Sigmoid colon (tissue), 7 donors: ENCODE measurements at regions of chr20 and their contacts with region 1.

Region 1: GRCh38 chr20:57493091-57493615 is 31.8 kb downstream of the CTCFL start:
- DNase-seq: no peak
- H3K4me3 ChIP-seq: no peak overlapping the region
- H3K27ac ChIP-seq: peak overlapping the region; percentile 66 to 76 (median 68)
- H3K4me1 ChIP-seq: peaks cover 0 to 15% (median 12%) of the 10 kb centered on the region in 4 donors
- H3K27me3 ChIP-seq: no peaks in the 10 kb centered on the region
- CTCF ChIP-seq: no peak
- EP300 ChIP-seq: no peak
- POLR2A ChIP-seq: no peak

Region 2: GRCh38 chr20:57383447-57384347 is 109.5 kb before region 1 on chr20:
- intact Hi-C with region 1: loop called (anchors 1 kb)
- DNase-seq: no peak
- H3K4me3 ChIP-seq: no peak overlapping the region
- H3K27ac ChIP-seq: no peak overlapping the region
- H3K4me1 ChIP-seq: peaks cover 0 to 11% (median 0%) of the 10 kb centered on the region in 4 donors
- H3K27me3 ChIP-seq: no peaks in the 10 kb centered on the region
- CTCF ChIP-seq: no peak
- EP300 ChIP-seq: no peak
- POLR2A ChIP-seq: peak in 1 of 2 donors; percentile 40

Region 3: GRCh38 chr20:57435498-57436222 is 57.5 kb before region 1 on chr20:
- intact Hi-C with region 1: loop called (anchors 2 kb)
- DNase-seq: peak; percentile 83
- H3K4me3 ChIP-seq: no peak overlapping the region
- H3K27ac ChIP-seq: peak overlapping the region; percentile 93 to 99 (median 95)
- H3K4me1 ChIP-seq: peaks cover 0 to 69% (median 65%) of the 10 kb centered on the region in 4 donors
- H3K27me3 ChIP-seq: no peaks in the 10 kb centered on the region
- CTCF ChIP-seq: no peak
- EP300 ChIP-seq: no peak
- POLR2A ChIP-seq: no peak